Common myeloid progenitor, CD34-positive (primary cell): ENCODE measurements at regions of chr3 and their contacts with region 1.

Region 1: GRCh38 chr3:196179380-196180308 is 31.6 kb downstream of the ZDHHC19 start:
- DNase-seq: peak; percentile 86 to 97 (median 94)
- H3K4me3 ChIP-seq: peak overlapping the region in 4 of 7 experiments; percentile 8 to 45 (median 26)
- H3K27ac ChIP-seq: peak overlapping the region; percentile 56 to 85
- H3K4me1 ChIP-seq: peaks cover 8 to 57% (median 49%) of the 10 kb centered on the region in 4 experiments
- H3K27me3 ChIP-seq: no peaks in the 10 kb centered on the region

Region 2: DNA sequence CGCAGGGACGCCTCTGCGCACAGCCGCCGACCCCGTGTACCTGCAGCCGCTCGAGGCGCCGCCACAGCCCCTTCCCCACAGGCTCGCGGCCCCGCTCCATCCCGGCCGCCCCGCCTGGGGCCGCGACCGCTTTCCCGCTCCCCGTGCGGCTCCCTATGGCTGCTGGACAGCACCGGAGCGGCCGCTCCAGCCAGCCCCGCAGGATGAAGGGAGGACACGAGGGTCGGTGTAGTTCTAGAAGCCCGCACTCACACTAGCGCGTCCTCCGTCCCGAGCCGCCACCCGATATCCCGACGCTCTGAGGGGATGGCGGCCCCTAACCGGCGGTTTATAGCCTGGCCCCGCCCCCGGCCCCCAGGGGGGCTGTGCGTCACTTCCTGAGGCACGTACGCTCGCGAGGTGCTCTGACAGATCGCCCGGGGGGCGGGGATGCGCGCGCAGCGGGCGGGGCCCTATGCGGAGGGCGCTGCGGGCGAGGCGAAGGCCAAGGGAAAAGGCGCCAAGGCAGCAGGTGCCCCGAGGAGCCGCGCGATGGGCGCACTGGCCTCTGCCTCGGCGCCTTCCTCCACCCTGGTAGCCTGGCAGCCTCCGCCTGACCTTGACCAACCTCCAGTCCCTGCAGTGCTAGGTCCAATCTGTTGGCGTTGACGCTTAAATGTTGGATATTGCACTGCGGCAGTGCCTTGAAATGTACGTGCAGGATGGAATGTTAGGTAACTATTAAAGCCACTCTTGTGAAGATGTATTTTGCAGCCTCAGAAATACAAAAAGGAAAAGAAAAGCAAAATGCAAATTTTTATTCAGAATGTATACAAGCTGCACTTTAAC is 97.6 kb before region 1 on chr3 and contains the start of gene TFRC:
- CTCF ChIA-PET with region 1: interaction called, 542 read pairs
- POLR2A ChIA-PET with region 1: interaction called, 3 read pairs
- DNase-seq: peak; percentile 95 to 97 (median 97)
- H3K4me3 ChIP-seq: peak within 1 kb of the TSS; percentile 84 to 99 (median 93)
- H3K27ac ChIP-seq: peak within 1 kb of the TSS; percentile 86 to 95
- H3K4me1 ChIP-seq: peaks cover 15 to 44% (median 41%) of the 10 kb centered on the region in 4 experiments
- H3K27me3 ChIP-seq: no peaks in the 10 kb centered on the region

Region 3: GRCh38 chr3:196193736-196194541 is 14.3 kb after region 1 on chr3:
- CTCF ChIA-PET with region 1: interaction called, 15 read pairs
- POLR2A ChIA-PET with region 1: interaction called, 3 read pairs
- DNase-seq: peak in 2 of 3 donors; percentile 50 to 70
- H3K4me3 ChIP-seq: no peak overlapping the region
- H3K27ac ChIP-seq: peak overlapping the region in 1 of 2 experiments; percentile 85
- H3K4me1 ChIP-seq: peaks cover 4 to 70% (median 41%) of the 10 kb centered on the region in 4 experiments
- H3K27me3 ChIP-seq: no peaks in the 10 kb centered on the region

Region 4: GRCh38 chr3:196399485-196399945 is 219.9 kb after region 1 on chr3:
- CTCF ChIA-PET with region 1: no interaction called
- POLR2A ChIA-PET with region 1: no interaction called
- DNase-seq: no peak
- H3K4me3 ChIP-seq: no peak overlapping the region
- H3K27ac ChIP-seq: no peak overlapping the region
- H3K4me1 ChIP-seq: no peaks in the 10 kb centered on the region
- H3K27me3 ChIP-seq: no peaks in the 10 kb centered on the region